ENCODE measurements at regions of chr1 and their contacts with region 1.

Region 1: DNA sequence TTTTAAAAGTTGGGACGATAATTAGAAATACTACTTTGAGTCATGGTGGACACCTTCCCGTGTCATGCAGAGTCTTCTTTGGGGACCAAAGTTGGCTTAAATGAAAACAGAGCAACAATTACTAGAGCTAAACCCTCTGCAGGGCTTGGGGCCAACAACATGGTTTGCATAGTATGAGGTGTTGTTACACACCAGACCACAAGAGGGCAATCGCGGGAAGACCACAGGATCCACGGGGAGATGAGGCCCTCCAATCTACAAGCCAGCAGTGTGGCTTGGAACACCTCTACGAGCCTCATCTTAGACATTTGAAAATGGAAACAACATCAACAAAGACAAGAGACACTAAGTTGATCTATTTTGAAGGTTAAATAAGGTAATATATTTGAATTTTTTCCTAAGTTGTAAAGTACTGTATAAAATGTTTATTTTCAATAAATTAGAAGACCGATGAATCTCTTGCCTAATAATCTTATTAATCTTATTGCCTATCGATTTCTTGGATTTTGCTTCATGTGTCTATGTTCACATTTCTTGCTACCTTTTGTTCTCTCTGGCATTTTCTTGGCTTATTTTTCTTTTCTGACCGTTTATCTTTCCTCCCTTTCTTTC is 8.2 kb upstream of the SMCP start:
- H3K4me3 Mint-ChIP-seq: no peak overlapping the region
- H3K27ac Mint-ChIP-seq: no peak overlapping the region
- H3K4me1 Mint-ChIP-seq: no peaks in the 10 kb centered on the region
- H3K27me3 Mint-ChIP-seq: no peaks in the 10 kb centered on the region

Region 2: GRCh38 chr1:152817309-152817708 is 52.6 kb before region 1 on chr1:
- intact Hi-C with region 1: no loop called
- H3K4me3 Mint-ChIP-seq: no peak overlapping the region
- H3K27ac Mint-ChIP-seq: no peak overlapping the region
- H3K4me1 Mint-ChIP-seq: peaks cover 16% of the 10 kb centered on the region
- H3K27me3 Mint-ChIP-seq: peaks cover 7% of the 10 kb centered on the region

Region 3: DNA sequence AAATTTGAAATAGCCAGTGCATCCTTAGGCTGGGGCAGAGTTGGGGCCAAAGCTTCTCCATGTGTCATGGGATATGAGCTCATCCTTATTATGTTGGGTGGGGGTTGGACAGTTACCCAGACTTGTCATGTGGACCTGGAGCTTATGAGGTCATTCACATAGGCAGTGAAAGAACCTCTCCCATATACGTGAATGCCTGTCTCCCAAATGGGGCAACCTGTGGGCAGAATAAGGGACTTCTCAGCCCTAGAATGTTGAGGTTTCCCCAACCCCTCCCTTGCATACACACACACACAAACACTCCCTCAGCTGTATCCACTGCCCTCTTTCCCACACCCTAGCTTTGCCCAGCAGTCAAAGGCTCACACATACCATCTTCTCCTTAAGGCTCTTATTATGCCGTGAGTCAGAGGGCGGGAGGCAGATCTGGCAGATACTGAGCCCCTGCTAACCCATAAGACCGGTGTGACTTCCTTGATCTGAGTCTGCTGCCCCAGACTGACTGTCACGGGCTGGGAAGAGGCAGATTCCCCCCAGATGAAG is 36.2 kb after region 1 on chr1:
- intact Hi-C with region 1: no loop called
- H3K4me3 Mint-ChIP-seq: no peak overlapping the region
- H3K27ac Mint-ChIP-seq: no peak overlapping the region
- H3K4me1 Mint-ChIP-seq: no peaks in the 10 kb centered on the region
- H3K27me3 Mint-ChIP-seq: peaks cover 17% of the 10 kb centered on the region

Region 4: GRCh38 chr1:152926091-152926490 is 56.2 kb after region 1 on chr1:
- intact Hi-C with region 1: no loop called
- H3K4me3 Mint-ChIP-seq: no peak overlapping the region
- H3K27ac Mint-ChIP-seq: no peak overlapping the region
- H3K4me1 Mint-ChIP-seq: no peaks in the 10 kb centered on the region
- H3K27me3 Mint-ChIP-seq: peaks cover 1% of the 10 kb centered on the region

Region 5: GRCh38 chr1:153070243-153070642 is 200.3 kb after region 1 on chr1:
- intact Hi-C with region 1: no loop called
- H3K4me3 Mint-ChIP-seq: no peak overlapping the region
- H3K27ac Mint-ChIP-seq: no peak overlapping the region
- H3K4me1 Mint-ChIP-seq: no peaks in the 10 kb centered on the region
- H3K27me3 Mint-ChIP-seq: peaks cover 5% of the 10 kb centered on the region

Region 6: DNA sequence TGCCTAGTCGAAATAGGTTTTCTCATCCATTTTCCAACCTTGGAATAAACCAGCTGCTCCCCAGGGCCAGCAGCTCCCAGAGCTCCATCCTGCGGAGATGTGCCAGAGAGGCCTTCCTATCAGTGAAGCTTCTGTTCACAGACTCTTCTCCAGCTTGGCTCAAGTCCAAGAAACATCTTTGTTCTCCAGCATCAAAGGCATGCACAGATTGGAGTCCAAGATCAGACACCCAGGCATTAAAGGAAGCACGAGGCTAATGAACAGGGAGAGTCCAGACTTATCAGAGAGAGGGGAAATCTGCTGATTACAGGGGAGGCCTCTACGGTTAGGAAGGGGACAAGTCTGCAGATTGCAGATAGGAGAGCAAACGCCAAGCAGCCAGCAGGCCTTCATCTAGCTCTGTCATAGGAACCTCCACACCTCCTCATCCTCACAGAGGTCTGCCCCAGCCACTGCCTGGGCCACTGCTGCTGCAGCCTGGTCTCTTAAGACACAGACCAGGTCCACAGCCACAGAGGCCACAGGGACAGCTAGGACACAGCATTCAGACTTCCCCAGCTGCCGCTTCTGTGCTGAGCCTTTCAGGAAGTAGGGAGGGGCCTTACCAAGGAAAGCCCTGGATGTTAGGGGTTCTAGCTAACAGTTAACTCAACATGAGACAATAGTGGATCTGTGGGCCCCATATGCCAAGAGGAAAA is 350.8 kb after region 1 on chr1:
- intact Hi-C with region 1: loop called (anchors 1 kb)
- H3K4me3 Mint-ChIP-seq: no peak overlapping the region
- H3K27ac Mint-ChIP-seq: no peak overlapping the region
- H3K4me1 Mint-ChIP-seq: peaks cover 5% of the 10 kb centered on the region
- H3K27me3 Mint-ChIP-seq: peaks cover 10% of the 10 kb centered on the region

Region 7: DNA sequence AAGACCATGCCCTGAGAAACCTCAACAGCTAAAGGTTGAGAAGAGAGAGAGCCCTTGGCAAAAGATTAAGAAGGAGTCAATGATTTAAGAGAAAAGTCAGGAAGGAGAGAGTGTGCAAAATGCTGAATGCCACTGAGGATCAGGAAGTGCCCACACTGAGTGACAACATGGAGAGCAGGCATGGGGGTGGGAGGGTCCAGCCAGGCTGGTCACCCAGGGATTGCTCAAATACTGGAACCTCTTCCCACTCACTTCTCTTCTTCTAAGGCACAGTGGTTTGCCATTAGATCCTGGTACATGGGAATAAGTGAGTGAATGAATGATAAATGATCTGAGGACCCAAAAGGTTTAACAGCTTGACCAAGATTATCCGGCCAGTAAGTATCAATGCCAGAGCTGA is 358.6 kb after region 1 on chr1:
- intact Hi-C with region 1: loop called (anchors 1 kb)
- H3K4me3 Mint-ChIP-seq: no peak overlapping the region
- H3K27ac Mint-ChIP-seq: no peak overlapping the region
- H3K4me1 Mint-ChIP-seq: peaks cover 32% of the 10 kb centered on the region
- H3K27me3 Mint-ChIP-seq: peaks cover 1% of the 10 kb centered on the region

Region 8: GRCh38 chr1:153277817-153278216 is 407.9 kb after region 1 on chr1:
- intact Hi-C with region 1: loop called (anchors 5 kb)
- H3K4me3 Mint-ChIP-seq: no peak overlapping the region
- H3K27ac Mint-ChIP-seq: no peak overlapping the region
- H3K4me1 Mint-ChIP-seq: no peaks in the 10 kb centered on the region
- H3K27me3 Mint-ChIP-seq: peaks cover 15% of the 10 kb centered on the region

Measured in dendritic cell treated with granulocyte-macrophage colony-stimulating factor and Interleukin-4, amounts not matched to agents 40 ng/mL and 50 ng/mL, for 4 days (primary cell).